K562 (cell line): ENCODE measurements at regions of chr17 and their contacts with region 1.

Region 1: GRCh38 chr17:34420254-34420766 is 57.3 kb upstream of the CCL1 start:
- DNase-seq: peak; percentile 71 to 82 (median 78)
- ATAC-seq: peak; percentile 90
- H3K4me3 ChIP-seq: no peak overlapping the region
- H3K27ac ChIP-seq: no peak overlapping the region
- H3K4me1 ChIP-seq: peaks cover 0 to 4% of the 10 kb centered on the region in 2 experiments; a peak in 1 of 5 replicates
- H3K27me3 ChIP-seq: peaks cover 7 to 22% of the 10 kb centered on the region in 2 experiments; a peak in 3 of 5 replicates
- CTCF ChIP-seq: peak; percentile 73 to 91 (median 91)
- EP300 ChIP-seq: no peak
- POLR2A ChIP-seq: no peak
- RAD21 ChIP-seq: peak; percentile 78 to 85

Region 2: GRCh38 chr17:34519282-34519681 is 99.0 kb after region 1 on chr17:
- CTCF ChIA-PET with region 1: interaction called, 5 read pairs
- POLR2A ChIA-PET with region 1: no interaction called
- in situ Hi-C with region 1: no loop called
- intact Hi-C with region 1: loop called (anchors 1 kb)
- DNase-seq: peak; percentile 57 to 80 (median 66)
- ATAC-seq: peak; percentile 88
- H3K4me3 ChIP-seq: no peak overlapping the region
- H3K27ac ChIP-seq: no peak overlapping the region
- H3K4me1 ChIP-seq: no peaks in the 10 kb centered on the region
- H3K27me3 ChIP-seq: peaks cover 0 to 15% of the 10 kb centered on the region in 2 experiments; a peak in 2 of 5 replicates
- CTCF ChIP-seq: peak; percentile 62 to 78 (median 68)
- EP300 ChIP-seq: no peak
- POLR2A ChIP-seq: no peak
- RAD21 ChIP-seq: peak; percentile 40 to 65

Region 3: DNA sequence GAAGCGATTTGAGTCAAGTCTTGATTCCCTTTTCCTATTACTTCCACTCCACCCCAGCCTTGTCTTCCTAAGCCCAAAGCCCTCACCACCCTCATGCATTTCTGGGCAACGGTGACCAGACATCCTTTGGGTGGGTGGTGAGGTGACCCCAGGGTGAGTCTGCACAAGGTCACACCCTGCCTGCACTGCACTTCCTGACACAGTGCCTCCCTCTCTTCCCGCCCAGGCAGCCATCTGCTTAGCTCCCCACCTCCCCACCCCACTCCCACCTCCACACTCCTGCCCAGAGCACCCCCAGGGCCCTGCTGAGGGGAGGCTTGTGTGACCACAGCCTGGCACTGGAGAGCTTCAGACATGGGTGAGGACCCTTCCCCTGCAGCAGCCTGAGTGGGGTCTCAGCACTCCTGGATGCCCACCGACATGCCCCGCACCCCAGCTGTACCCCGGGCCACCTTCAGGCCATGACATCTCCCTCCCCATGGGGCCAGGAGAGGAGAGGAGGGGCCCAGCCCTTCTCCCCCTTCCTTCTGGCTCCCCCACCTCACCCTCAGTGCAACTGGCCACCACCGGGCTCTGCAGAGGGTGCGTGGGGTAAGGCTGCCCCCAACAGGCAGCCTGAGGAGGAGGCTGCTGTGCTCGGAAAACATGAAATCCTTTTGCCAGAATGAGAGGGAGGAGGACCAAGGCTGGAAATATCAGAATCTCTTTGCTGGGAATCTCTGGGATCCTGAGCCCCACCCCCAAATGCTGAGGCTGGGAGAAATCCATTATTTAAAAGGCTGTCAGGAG is 472.3 kb after region 1 on chr17:
- CTCF ChIA-PET with region 1: no interaction called
- POLR2A ChIA-PET with region 1: no interaction called
- in situ Hi-C with region 1: no loop called
- intact Hi-C with region 1: loop called (anchors 10 kb)
- DNase-seq: peak; percentile 57 to 75 (median 64)
- ATAC-seq: peak; percentile 90
- H3K4me3 ChIP-seq: no peak overlapping the region
- H3K27ac ChIP-seq: no peak overlapping the region
- H3K4me1 ChIP-seq: peaks cover 0 to 8% of the 10 kb centered on the region in 2 experiments; a peak in 4 of 5 replicates
- H3K27me3 ChIP-seq: peaks cover 0 to 32% of the 10 kb centered on the region in 2 experiments; a peak in 2 of 5 replicates
- CTCF ChIP-seq: peak; percentile 79 to 87 (median 83)
- EP300 ChIP-seq: no peak
- POLR2A ChIP-seq: no peak
- RAD21 ChIP-seq: peak; percentile 61 to 84